Tibial artery (tissue), 4 donors: ENCODE measurements at regions of chr2 and their contacts with region 1.

Region 1: GRCh38 chr2:105521205-105521604 is 122.4 kb upstream of the FHL2 start:
- DNase-seq: no peak
- H3K4me3 ChIP-seq: no peak overlapping the region
- H3K27ac ChIP-seq: no peak overlapping the region
- H3K4me1 ChIP-seq: peaks cover 0 to 28% (median 24%) of the 10 kb centered on the region in 4 donors
- H3K27me3 ChIP-seq: peaks cover 0 to 12% of the 10 kb centered on the region in 2 donors
- CTCF ChIP-seq: peak; percentile 52 to 76

Region 2: DNA sequence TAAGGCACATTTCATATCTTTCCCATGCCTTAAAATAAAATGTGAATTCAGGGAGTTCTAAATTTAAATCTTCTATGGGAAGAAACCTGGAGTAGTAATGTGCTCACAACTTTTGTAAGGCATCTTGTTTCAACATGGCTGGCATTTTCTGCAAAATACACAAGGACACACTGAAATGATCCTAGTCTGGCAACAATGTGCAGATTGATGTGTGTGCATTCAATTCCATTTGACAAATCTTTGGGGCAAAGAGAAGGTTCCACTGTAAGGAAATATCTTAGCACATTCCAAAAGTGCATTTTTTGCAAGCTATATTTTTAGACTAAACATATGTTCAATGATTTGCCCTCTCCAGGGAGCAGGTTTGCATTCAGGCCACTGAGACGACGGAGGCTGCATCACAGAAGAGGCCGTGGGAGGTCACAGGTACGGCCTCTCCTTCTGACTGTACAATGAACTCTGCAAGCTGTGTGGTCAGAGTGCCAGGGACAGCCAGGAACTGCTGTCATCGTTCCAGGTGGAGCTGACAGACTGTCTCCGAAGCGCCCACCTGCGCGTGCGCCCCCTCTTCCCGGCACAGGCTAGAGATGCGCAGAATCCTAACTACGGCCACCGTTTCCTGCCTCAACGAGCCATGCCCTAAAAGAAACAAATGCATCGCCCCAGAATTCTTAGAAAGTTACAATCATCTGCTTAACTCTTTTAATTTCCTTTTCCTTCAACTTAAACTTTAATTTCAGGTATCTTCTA is 816.5 kb before region 1 on chr2:
- intact Hi-C with region 1: no loop called
- DNase-seq: no peak
- H3K4me3 ChIP-seq: no peak overlapping the region
- H3K27ac ChIP-seq: no peak overlapping the region
- H3K4me1 ChIP-seq: no peaks in the 10 kb centered on the region
- H3K27me3 ChIP-seq: peaks cover 0 to 3% of the 10 kb centered on the region in 2 donors
- CTCF ChIP-seq: no peak

Region 3: GRCh38 chr2:105139556-105140239 is 381.5 kb before region 1 on chr2:
- intact Hi-C with region 1: no loop called
- DNase-seq: no peak
- H3K4me3 ChIP-seq: no peak overlapping the region
- H3K27ac ChIP-seq: no peak overlapping the region
- H3K4me1 ChIP-seq: peaks cover 0 to 14% (median 3%) of the 10 kb centered on the region in 4 donors
- H3K27me3 ChIP-seq: peaks cover 0 to 14% of the 10 kb centered on the region in 2 donors
- CTCF ChIP-seq: no peak

Region 4: GRCh38 chr2:105187531-105187930 is 333.7 kb before region 1 on chr2:
- intact Hi-C with region 1: no loop called
- DNase-seq: no peak
- H3K4me3 ChIP-seq: no peak overlapping the region
- H3K27ac ChIP-seq: no peak overlapping the region
- H3K4me1 ChIP-seq: no peaks in the 10 kb centered on the region
- H3K27me3 ChIP-seq: no peaks in the 10 kb centered on the region
- CTCF ChIP-seq: no peak

Region 5: DNA sequence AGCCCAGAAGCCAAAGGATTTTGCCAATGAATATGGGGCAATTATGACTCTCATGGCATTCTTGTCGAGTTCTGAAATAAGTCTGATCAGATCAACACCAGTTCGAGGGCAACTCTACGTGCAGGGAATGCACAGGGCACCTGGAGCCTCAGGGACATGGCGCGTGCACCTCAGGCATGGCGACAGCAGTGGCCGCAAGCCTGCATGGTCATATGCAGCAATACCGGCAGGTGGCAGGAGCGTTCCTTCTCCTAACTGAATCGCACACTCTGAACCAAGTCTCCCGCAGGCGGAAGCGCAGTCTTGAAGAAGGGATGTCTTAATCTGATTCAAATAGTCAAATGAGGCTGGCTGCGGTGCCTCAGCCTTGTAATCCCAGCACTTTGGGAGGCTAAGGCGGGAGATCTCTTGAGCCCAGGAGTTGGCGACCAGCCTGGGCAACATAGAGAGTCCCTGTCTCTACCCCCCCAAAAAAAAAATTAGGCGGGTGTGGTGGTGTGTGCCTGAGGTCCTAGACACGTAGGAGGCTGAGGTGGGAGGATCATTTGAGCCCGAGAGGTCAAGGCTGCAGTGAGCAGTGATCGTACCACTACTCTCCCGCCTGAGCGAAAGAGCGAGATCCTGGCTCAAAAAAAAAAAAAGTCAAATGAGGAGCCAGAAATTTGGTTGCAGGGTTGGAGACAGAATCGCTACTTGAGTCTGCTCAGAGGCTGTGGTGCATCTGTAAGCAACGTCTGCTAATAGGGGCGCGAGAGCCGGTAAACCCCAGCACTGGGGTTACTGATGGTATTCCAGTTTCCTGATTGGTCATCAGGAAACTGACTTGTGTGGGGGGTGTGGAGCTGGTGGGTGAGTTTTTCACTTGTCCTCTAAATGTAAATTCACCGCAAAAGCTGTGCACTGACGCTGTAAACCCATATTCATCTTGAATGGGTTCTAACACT is 151.2 kb before region 1 on chr2:
- intact Hi-C with region 1: loop called (anchors 1 kb)
- DNase-seq: peak; percentile 90 to 91
- H3K4me3 ChIP-seq: no peak overlapping the region
- H3K27ac ChIP-seq: no peak overlapping the region
- H3K4me1 ChIP-seq: peaks cover 0 to 43% (median 22%) of the 10 kb centered on the region in 4 donors
- H3K27me3 ChIP-seq: no peaks in the 10 kb centered on the region
- CTCF ChIP-seq: peak; percentile 95 to 98